ENCODE measurements at regions of chr1 and their contacts with region 1.

Region 1: DNA sequence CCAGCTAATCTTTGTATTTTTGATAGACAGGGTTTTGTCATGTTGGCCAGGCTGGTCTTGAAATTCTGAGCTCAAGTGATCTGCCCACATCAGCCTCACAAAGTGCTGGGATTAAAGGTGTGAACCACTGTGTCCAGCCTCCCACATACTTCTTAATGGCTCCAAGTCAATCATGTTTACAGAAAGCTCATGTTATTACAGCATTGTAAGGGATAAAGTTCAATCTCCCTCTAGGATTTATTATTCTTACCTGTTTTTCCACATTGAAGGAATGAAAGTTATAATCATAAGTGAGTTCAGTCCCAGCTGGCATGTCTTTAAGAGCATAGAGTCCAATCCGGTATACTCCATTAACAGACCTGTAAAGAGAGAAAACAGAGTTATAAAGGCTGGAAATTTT is 39.4 kb downstream of the RUSC1 start:
- DNase-seq: no peak
- ATAC-seq: no peak
- H3K4me3 ChIP-seq: no peak overlapping the region
- H3K4me3 Mint-ChIP-seq: no peak overlapping the region
- H3K27ac ChIP-seq: no peak overlapping the region
- H3K27ac Mint-ChIP-seq: no peak overlapping the region
- H3K4me1 ChIP-seq: no peaks in the 10 kb centered on the region
- H3K4me1 Mint-ChIP-seq: no peaks in the 10 kb centered on the region
- H3K27me3 ChIP-seq: no peaks in the 10 kb centered on the region
- H3K27me3 Mint-ChIP-seq: no peaks in the 10 kb centered on the region

Region 2: GRCh38 chr1:155320661-155321617 is 39.1 kb before region 1 on chr1 and contains the start of gene RUSC1:
- CTCF ChIA-PET with region 1: no interaction called
- POLR2A ChIA-PET with region 1: no interaction called
- DNase-seq: peak; percentile 47 to 78 (median 67)
- ATAC-seq: peak; percentile 14 to 43 (median 22)
- H3K4me3 ChIP-seq: peak within 1 kb of the TSS; percentile 35 to 36
- H3K4me3 Mint-ChIP-seq: peak within 1 kb of the TSS; percentile 68 to 89 (median 71)
- H3K27ac ChIP-seq: no peak within 1 kb of the TSS
- H3K27ac Mint-ChIP-seq: peak within 1 kb of the TSS in 1 of 2 donors; percentile 25
- H3K4me1 ChIP-seq: peaks cover 5 to 45% of the 10 kb centered on the region in 2 experiments
- H3K4me1 Mint-ChIP-seq: peaks cover 30 to 37% (median 31%) of the 10 kb centered on the region in 3 donors
- H3K27me3 ChIP-seq: peaks cover 0 to 2% of the 10 kb centered on the region in 2 experiments
- H3K27me3 Mint-ChIP-seq: no peaks in the 10 kb centered on the region
- total RNA-seq, gene RUSC1: 14.4 to 25.2 (median 22.9) TPM

Region 3: DNA sequence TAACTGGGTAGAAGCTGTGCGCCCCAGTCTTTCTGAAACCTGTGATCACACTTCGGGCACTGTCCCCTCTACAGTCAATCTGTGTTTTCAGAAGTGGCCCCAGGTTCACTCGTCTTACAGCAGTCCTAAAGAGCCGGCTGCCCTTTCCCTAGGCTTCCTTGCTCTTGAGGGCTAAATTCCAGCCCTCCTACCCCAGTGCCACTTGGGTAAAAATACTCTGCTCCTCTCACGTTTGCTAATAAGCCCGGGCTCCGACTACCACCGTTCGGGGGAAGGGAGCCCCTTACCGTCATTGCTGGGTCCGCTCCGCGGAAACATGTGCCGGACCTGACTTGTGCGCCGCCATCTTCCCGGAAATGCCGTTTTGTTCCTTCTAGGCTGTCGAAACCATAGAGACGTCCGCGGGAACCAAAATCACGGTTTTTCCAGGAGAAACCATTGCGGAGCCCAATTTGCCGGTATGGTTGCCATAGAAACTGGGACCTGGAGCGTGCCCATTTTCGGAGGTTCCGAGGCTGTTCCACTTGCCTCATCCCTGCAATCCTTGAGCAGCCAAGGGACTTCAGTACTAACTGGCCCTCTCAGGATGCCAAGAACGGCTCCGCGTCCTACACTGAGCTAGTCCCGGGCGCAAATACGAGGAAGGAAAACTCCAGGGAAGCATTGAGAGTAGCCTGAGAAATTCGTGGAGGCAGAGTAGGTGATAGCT is 1241.2 kb after region 1 on chr1 and contains the start of gene GPATCH4:
- CTCF ChIA-PET with region 1: no interaction called
- POLR2A ChIA-PET with region 1: interaction called in 1 of 2 experiments, 14 read pairs
- DNase-seq: peak; percentile 43 to 82 (median 60)
- ATAC-seq: peak; percentile 86 to 90 (median 88)
- H3K4me3 ChIP-seq: peak within 1 kb of the TSS; percentile 96 to 99
- H3K4me3 Mint-ChIP-seq: peak within 1 kb of the TSS; percentile 79 to 100 (median 99)
- H3K27ac ChIP-seq: peak within 1 kb of the TSS; percentile 77
- H3K27ac Mint-ChIP-seq: peak within 1 kb of the TSS; percentile 93 to 97
- H3K4me1 ChIP-seq: peaks cover 12 to 33% of the 10 kb centered on the region in 2 experiments
- H3K4me1 Mint-ChIP-seq: peaks cover 26 to 35% (median 35%) of the 10 kb centered on the region in 3 donors
- H3K27me3 ChIP-seq: no peaks in the 10 kb centered on the region
- H3K27me3 Mint-ChIP-seq: no peaks in the 10 kb centered on the region
- total RNA-seq, gene GPATCH4: 34.3 to 41.6 (median 40.6) TPM